ENCODE measurements at regions of chr1 and their contacts with region 1.

Region 1: GRCh38 chr1:165933446-165934178 is 106.2 kb downstream of the UCK2 start:
- DNase-seq: no peak
- H3K4me3 ChIP-seq: no peak overlapping the region
- H3K27ac ChIP-seq: no peak overlapping the region
- H3K4me1 ChIP-seq: no peaks in the 10 kb centered on the region
- H3K27me3 ChIP-seq: no peaks in the 10 kb centered on the region
- CTCF ChIP-seq: no peak
- EP300 ChIP-seq: no peak
- POLR2A ChIP-seq: no peak

Region 2: GRCh38 chr1:165999826-166000225 is 66.2 kb after region 1 on chr1:
- in situ Hi-C with region 1: no loop called
- intact Hi-C with region 1: no loop called
- DNase-seq: no peak
- H3K4me3 ChIP-seq: no peak overlapping the region
- H3K27ac ChIP-seq: no peak overlapping the region
- H3K4me1 ChIP-seq: no peaks in the 10 kb centered on the region
- H3K27me3 ChIP-seq: no peaks in the 10 kb centered on the region
- CTCF ChIP-seq: no peak
- EP300 ChIP-seq: no peak
- POLR2A ChIP-seq: no peak

Region 3: GRCh38 chr1:166053395-166053794 is 119.8 kb after region 1 on chr1:
- in situ Hi-C with region 1: no loop called
- intact Hi-C with region 1: no loop called
- DNase-seq: no peak
- H3K4me3 ChIP-seq: no peak overlapping the region
- H3K27ac ChIP-seq: no peak overlapping the region
- H3K4me1 ChIP-seq: no peaks in the 10 kb centered on the region
- H3K27me3 ChIP-seq: no peaks in the 10 kb centered on the region
- CTCF ChIP-seq: no peak
- EP300 ChIP-seq: no peak
- POLR2A ChIP-seq: no peak

Region 4: DNA sequence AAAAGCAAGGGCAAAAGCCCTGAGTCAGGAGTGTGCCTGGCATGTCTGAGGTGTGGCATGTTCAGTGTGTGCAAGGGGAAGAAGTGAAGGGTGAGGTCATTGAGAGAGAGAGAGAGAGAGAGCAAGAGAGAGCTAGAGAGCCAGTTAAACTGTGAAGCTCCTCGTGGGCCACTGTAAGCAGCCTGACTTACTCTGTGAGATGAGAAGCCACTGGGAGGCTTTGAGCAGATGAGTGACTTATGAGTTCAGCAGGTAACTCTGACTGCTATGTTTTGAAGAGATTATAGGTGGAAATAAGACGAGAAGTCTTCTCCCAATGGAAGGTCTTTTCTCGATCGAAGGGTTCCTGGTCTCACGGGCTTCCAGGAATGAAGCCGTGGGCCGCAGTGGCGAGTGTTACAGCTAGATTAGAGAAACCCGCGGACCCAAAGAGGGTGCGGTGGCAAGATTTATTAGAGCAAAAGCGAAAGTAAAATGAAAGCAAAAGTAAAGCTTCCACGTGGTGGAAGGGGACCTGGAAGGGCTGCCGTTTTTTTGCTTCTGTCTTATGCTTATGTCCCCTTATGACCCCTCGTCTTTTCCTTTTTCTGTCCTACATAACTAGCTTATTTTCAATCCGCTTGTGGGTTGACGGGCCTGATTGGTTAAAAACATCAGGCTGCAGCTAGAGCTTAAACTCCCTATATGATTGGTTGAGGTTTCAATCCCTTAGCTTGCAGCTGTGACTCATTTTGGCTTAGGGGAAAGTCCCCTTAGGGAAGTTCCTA is 556.2 kb after region 1 on chr1:
- in situ Hi-C with region 1: loop called in 1 of 4 experiments (anchors 10 kb)
- intact Hi-C with region 1: no loop called
- DNase-seq: peak; percentile 22
- H3K4me3 ChIP-seq: peak overlapping the region; percentile 9 to 51 (median 28)
- H3K27ac ChIP-seq: peak overlapping the region; percentile 54 to 81 (median 69)
- H3K4me1 ChIP-seq: peaks cover 0 to 14% (median 0%) of the 10 kb centered on the region in 4 donors
- H3K27me3 ChIP-seq: no peaks in the 10 kb centered on the region
- CTCF ChIP-seq: no peak
- EP300 ChIP-seq: no peak
- POLR2A ChIP-seq: no peak

Region 5: GRCh38 chr1:166705376-166706289 is 772.0 kb after region 1 on chr1:
- in situ Hi-C with region 1: no loop called
- intact Hi-C with region 1: no loop called
- DNase-seq: no peak
- H3K4me3 ChIP-seq: no peak overlapping the region
- H3K27ac ChIP-seq: no peak overlapping the region
- H3K4me1 ChIP-seq: no peaks in the 10 kb centered on the region
- H3K27me3 ChIP-seq: no peaks in the 10 kb centered on the region
- CTCF ChIP-seq: no peak
- EP300 ChIP-seq: no peak
- POLR2A ChIP-seq: no peak

Measured in transverse colon (tissue), 4 donors.